ENCODE measurements at regions of chr7 and their contacts with region 1.

Region 1: DNA sequence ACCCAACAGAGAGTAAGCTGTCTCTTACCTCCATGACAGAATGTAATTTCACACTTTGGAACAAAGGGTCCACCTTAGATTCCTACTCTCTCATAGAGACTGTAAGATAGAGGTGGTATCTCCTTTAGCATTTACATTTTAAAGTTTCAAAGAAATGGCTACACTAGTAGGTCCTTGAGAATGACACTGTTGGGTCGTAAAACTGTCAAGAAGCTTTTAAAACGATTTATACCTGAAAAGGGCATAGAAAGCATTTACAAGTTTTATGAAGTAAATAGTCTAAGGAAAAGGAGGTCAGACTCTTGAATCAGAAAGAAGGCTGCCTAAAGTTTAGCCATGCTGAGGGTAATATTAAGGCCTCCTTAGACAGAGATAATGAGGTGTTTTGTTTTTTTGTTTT is 1212.4 kb upstream of the PHF14 start:
- DNase-seq: no peak

Region 2: GRCh38 chr7:8785077-8785476 is 976.1 kb before region 1 on chr7:
- intact Hi-C with region 1: loop called in 1 of 2 experiments (anchors 5 kb)
- DNase-seq: no peak

Region 3: GRCh38 chr7:9645756-9646155 is 115.5 kb before region 1 on chr7:
- intact Hi-C with region 1: no loop called
- DNase-seq: no peak

Region 4: DNA sequence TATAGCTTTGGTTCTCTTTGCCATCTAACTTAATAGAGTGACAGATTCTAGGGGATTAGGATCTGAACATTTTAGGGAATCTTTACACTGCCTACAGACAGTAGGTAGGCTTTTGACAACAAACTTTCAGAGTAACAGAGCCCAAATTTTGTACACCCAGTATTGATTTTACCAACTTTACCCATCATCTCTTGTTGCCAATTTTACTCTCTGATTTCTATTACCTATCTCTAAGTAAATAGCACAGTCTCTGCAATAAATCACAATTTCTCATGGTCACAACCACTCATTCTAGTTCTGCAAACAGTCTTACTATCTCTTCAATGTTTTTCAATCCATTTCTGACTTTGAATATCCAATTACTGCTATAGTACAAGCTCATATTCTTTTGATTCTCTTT is 114.8 kb after region 1 on chr7:
- intact Hi-C with region 1: no loop called
- DNase-seq: no peak